ENCODE measurements at regions of chr4 and their contacts with region 1.

Region 1: DNA sequence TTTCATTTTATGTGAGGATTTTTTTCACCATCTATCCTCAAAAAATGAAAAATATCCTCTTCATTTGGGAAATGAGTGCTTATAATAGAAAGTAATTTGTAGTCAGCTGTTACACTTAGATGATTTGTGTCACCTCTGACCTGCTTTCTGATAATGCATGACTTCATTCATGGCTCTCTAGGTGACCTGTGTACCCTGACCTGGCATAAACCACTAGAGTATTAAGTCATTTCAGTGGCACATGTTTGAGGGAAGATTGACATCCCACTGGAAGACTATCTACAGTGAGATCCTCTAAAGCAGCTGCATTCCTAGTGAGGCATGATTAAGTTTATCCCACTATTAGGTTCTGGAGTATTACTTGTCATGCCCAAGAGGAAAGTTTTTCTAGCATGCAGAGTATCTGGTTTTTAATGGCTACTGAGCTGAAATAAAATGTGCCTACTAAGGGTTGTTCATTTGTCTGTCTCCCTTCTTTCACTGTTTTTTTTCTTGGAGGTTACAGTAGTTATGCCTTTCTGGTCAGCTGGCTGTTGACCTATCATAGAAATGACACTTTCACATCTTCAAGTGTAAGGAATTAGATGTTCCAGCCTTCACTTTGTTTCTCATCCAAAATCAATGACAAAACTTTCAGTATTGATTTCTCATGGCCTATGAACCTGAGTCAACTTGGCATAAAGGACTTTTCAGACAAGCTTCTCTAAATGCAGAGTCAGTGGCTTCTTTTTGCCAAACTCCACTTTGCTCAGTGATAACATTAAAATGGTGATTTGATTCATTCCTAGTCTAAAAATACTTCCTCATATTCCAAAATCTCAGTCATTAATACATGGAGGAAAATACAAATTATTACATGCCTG is 33.1 kb downstream of the TET2 start:
- DNase-seq: no peak
- ATAC-seq: peak; percentile 82
- H3K4me3 ChIP-seq: no peak overlapping the region
- H3K27ac ChIP-seq: no peak overlapping the region
- H3K4me1 ChIP-seq: no peaks in the 10 kb centered on the region
- H3K27me3 ChIP-seq: no peaks in the 10 kb centered on the region
- CTCF ChIP-seq: no peak
- EP300 ChIP-seq: no peak
- POLR2A ChIP-seq: no peak
- RAD21 ChIP-seq: no peak

Region 2: GRCh38 chr4:105162123-105162796 is 17.5 kb before region 1 on chr4:
- CTCF ChIA-PET with region 1: no interaction called
- POLR2A ChIA-PET with region 1: no interaction called
- RAD21 ChIA-PET with region 1: interaction called, 3 read pairs
- SMC1A ChIA-PET with region 1: interaction called, 10 read pairs
- in situ Hi-C with region 1: no loop called
- intact Hi-C with region 1: no loop called
- DNase-seq: no peak
- ATAC-seq: peak; percentile 70
- H3K4me3 ChIP-seq: no peak overlapping the region
- H3K27ac ChIP-seq: no peak overlapping the region; the same call in 1 of the 2 replicates
- H3K4me1 ChIP-seq: peaks cover 5% of the 10 kb centered on the region; the same call in 1 of the 2 replicates
- H3K27me3 ChIP-seq: no peaks in the 10 kb centered on the region
- CTCF ChIP-seq: no peak
- EP300 ChIP-seq: no peak
- POLR2A ChIP-seq: no peak
- RAD21 ChIP-seq: no peak